ENCODE measurements at regions of chr2 and their contacts with region 1.

Region 1: GRCh38 chr2:157480182-157480961 is 36.5 kb upstream of the CYTIP start:
- DNase-seq: peak; percentile 82
- H3K4me3 Mint-ChIP-seq: peak overlapping the region; percentile 54
- H3K27ac Mint-ChIP-seq: peak overlapping the region; percentile 95
- H3K4me1 Mint-ChIP-seq: peaks cover 68% of the 10 kb centered on the region
- H3K27me3 Mint-ChIP-seq: no peaks in the 10 kb centered on the region

Region 2: GRCh38 chr2:157261199-157261783 is 219.1 kb before region 1 on chr2:
- CTCF ChIA-PET with region 1: no interaction called
- POLR2A ChIA-PET with region 1: no interaction called
- intact Hi-C with region 1: loop called (anchors 5 kb)
- DNase-seq: peak; percentile 81
- H3K4me3 Mint-ChIP-seq: no peak overlapping the region
- H3K27ac Mint-ChIP-seq: peak overlapping the region; percentile 18
- H3K4me1 Mint-ChIP-seq: peaks cover 19% of the 10 kb centered on the region
- H3K27me3 Mint-ChIP-seq: peaks cover 5% of the 10 kb centered on the region

Region 3: DNA sequence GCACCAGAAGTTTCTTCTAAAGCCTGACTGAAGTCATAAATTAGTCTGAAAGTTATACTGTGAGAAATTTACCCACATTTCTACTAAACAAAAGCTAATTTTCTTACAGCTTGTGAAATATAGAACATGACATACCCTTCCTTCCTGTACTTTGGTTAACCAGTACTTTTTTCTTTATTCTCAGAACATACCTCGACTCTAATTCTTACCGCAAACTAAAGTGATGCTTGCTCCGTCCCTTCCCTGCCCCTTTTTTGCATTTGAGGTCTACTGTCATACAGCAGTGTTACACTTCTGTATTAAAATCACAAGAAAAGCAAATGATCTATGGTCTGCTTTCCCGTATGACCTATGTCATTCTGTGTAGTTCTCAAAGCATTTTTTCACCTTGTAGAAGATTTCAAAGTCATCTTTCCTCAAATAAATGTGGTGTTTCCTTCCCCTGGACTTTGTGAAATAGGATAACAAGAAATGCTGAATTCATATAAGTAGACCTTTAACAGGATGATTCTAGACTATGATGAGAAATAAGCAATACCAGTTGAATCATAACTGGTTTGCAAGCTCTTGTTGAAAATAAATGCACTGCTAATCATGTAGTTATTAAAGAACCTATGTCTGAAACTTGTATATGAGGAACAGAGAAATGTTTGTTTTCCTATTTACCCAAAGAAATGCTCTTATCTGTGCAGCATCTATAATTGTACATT is 66.9 kb before region 1 on chr2:
- CTCF ChIA-PET with region 1: no interaction called
- POLR2A ChIA-PET with region 1: interaction called, 15 read pairs
- intact Hi-C with region 1: loop called (anchors 1 kb)
- DNase-seq: peak; percentile 75
- H3K4me3 Mint-ChIP-seq: peak overlapping the region; percentile 65
- H3K27ac Mint-ChIP-seq: peak overlapping the region; percentile 98
- H3K4me1 Mint-ChIP-seq: peaks cover 81% of the 10 kb centered on the region
- H3K27me3 Mint-ChIP-seq: peaks cover 2% of the 10 kb centered on the region

Region 4: DNA sequence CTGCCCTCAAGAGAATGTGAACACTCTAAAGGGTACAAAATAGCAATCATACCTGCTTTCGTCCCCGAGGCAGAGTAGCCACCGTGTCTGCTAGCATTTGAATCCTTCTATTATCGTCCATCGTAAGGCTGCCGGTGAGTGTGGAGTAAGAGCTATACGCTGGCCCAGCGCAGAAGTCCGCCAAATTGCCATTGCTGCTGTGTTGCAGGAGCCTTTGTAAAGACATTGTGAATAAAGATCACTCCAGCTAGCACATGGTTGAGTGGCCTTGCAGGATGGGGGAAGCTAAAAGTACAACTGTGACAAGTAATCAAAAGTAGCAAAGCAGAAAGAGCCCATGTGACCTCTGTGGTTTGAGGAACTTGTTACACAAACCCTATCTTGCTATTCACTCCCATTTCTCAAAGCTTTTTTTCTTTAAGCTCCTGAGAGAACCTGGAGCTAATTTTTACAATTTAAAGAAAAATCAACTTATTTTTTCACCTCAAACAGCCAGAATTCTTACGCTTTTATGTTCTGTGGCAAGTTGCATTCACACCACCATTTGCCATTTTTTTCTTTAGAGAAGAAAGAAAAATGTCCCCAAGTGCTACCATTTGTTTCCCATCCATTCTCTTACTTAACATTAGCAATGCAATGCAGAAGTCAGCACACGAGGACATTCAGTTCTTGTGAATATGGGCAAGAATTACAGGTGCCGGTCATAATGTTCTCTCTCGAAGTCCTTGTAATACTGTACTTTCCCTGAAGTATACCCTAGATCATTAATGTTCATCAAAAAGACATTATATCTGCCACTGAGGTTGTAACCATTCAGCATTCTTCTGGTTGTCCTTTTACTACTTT is 36.4 kb before region 1 on chr2 and contains the start of gene CYTIP:
- CTCF ChIA-PET with region 1: interaction called, 10 read pairs
- POLR2A ChIA-PET with region 1: interaction called, 97 read pairs
- intact Hi-C with region 1: loop called (anchors 1 kb)
- DNase-seq: peak; percentile 82
- H3K4me3 Mint-ChIP-seq: peak within 1 kb of the TSS; percentile 92
- H3K27ac Mint-ChIP-seq: peak within 1 kb of the TSS; percentile 99
- H3K4me1 Mint-ChIP-seq: peaks cover 37% of the 10 kb centered on the region
- H3K27me3 Mint-ChIP-seq: peaks cover 2% of the 10 kb centered on the region
- total RNA-seq, gene CYTIP: 369 to 388 TPM

Region 5: DNA sequence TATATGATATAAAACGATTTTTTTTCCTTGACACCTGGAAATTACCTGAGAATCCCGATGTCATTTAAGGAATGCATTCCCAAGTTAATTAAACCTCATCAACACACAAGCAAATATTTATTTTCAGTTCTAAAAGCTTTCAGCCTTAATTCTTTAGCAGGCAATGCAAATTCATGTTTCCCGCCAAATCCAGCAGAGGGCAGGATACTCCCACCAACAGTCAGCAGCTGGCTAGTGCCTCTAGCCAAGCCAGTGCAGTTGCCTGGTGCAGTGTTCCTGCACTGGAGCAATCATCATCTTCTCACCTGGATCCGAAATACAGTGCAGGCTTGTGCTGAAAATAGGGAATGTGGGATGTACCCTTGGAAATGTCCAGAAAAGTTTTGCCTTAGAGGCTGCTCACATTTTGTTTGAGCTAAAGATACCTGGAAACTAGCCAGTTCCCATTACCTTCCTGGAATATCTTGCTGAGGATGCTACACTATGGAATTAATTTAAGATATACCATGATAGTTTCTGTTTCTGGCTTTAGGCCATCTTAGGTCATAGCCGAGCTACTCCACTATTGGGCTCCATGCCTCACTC is 11.9 kb after region 1 on chr2:
- CTCF ChIA-PET with region 1: interaction called, 21 read pairs
- POLR2A ChIA-PET with region 1: interaction called, 4 read pairs
- intact Hi-C with region 1: no loop called
- DNase-seq: peak; percentile 83
- H3K4me3 Mint-ChIP-seq: no peak overlapping the region
- H3K27ac Mint-ChIP-seq: no peak overlapping the region
- H3K4me1 Mint-ChIP-seq: peaks cover 55% of the 10 kb centered on the region
- H3K27me3 Mint-ChIP-seq: no peaks in the 10 kb centered on the region

Region 6: GRCh38 chr2:158456309-158457066 is 976.1 kb after region 1 on chr2 and contains the starts of genes CCDC148 and PKP4:
- CTCF ChIA-PET with region 1: no interaction called
- POLR2A ChIA-PET with region 1: no interaction called
- intact Hi-C with region 1: loop called (anchors 10 kb)
- DNase-seq: peak; percentile 94
- H3K4me3 Mint-ChIP-seq: peak within 1 kb of the TSS; percentile 93
- H3K27ac Mint-ChIP-seq: peak within 1 kb of the TSS; percentile 72
- H3K4me1 Mint-ChIP-seq: peaks cover 28% of the 10 kb centered on the region
- H3K27me3 Mint-ChIP-seq: no peaks in the 10 kb centered on the region
- total RNA-seq, gene CCDC148: 0.29 TPM in 1 of 2 experiments, not detected in the other
- total RNA-seq, gene PKP4: 41.4 to 43.1 TPM

Measured in activated CD4-positive, alpha-beta memory T cell treated with anti-CD3 and anti-CD28 coated beads for 36 hours (primary cell).